ENCODE measurements at regions of chrX and their contacts with region 1.

Region 1: GRCh38 chrX:115147220-115147619 is 42.0 kb upstream of the RBMXL3 start:
- DNase-seq: no peak
- ATAC-seq: no peak
- H3K4me3 ChIP-seq: no peak overlapping the region
- H3K27ac ChIP-seq: no peak overlapping the region
- H3K4me1 ChIP-seq: no peaks in the 10 kb centered on the region
- H3K27me3 ChIP-seq: peaks cover 0 to 8% (median 0%) of the 10 kb centered on the region in 9 donors
- CTCF ChIP-seq: peak in 11 of 12 donors; percentile 35 to 63 (median 54)
- POLR2A ChIP-seq: no peak

Region 2: GRCh38 chrX:114611018-114611619 is 536.1 kb before region 1 on chrX:
- intact Hi-C with region 1: loop called in 7 of 10 experiments (anchors 5 to 10 kb)
- DNase-seq: peak in 2 of 5 donors; percentile 4 to 15
- ATAC-seq: no peak
- H3K4me3 ChIP-seq: no peak overlapping the region
- H3K27ac ChIP-seq: no peak overlapping the region
- H3K4me1 ChIP-seq: no peaks in the 10 kb centered on the region
- H3K27me3 ChIP-seq: peaks cover 0 to 17% (median 0%) of the 10 kb centered on the region in 9 donors
- CTCF ChIP-seq: peak; percentile 54 to 90 (median 68)
- POLR2A ChIP-seq: no peak

Region 3: DNA sequence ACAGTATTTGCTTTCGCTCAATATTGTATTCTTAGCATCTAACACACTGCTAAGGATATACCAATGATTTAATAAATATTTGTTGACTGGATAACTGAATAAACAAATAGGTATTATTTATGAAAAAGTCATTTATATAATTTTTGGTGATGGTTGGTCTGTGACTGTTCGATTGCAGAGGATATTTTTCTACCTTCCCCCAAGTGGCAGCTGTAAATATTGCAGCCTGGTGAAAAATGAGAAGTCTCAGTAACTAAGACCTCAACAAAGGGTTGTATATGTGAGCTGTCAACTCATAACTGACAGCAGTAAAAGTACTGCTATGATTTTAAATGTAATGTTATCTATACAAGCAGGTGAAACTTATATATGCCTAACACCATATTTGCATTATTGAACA is 527.3 kb before region 1 on chrX:
- intact Hi-C with region 1: loop called in 6 of 10 experiments (anchors 10 kb)
- DNase-seq: no peak
- ATAC-seq: no peak
- H3K4me3 ChIP-seq: no peak overlapping the region
- H3K27ac ChIP-seq: no peak overlapping the region
- H3K4me1 ChIP-seq: no peaks in the 10 kb centered on the region
- H3K27me3 ChIP-seq: peaks cover 0 to 12% (median 0%) of the 10 kb centered on the region in 9 donors
- CTCF ChIP-seq: peak in 9 of 12 donors; percentile 15 to 48 (median 32)
- POLR2A ChIP-seq: no peak

Measured in heart left ventricle (tissue), 16 donors.